CD4-positive, alpha-beta memory T cell (primary cell): ENCODE measurements at regions of chr12 and their contacts with region 1.

Region 1: GRCh38 chr12:51531978-51532497 is 59.0 kb upstream of the SCN8A start:
- DNase-seq: peak; percentile 60 to 70 (median 65)
- H3K4me3 ChIP-seq: no peak overlapping the region
- H3K4me3 Mint-ChIP-seq: no peak overlapping the region
- H3K27ac ChIP-seq: no peak overlapping the region
- H3K27ac Mint-ChIP-seq: peak overlapping the region in 2 of 7 donors; percentile 9 to 27
- H3K4me1 ChIP-seq: no peaks in the 10 kb centered on the region
- H3K4me1 Mint-ChIP-seq: peaks cover 3 to 8% (median 6%) of the 10 kb centered on the region in 4 donors
- H3K27me3 ChIP-seq: no peaks in the 10 kb centered on the region
- H3K27me3 Mint-ChIP-seq: peaks cover 6 to 11% of the 10 kb centered on the region in 2 donors

Region 2: GRCh38 chr12:51270067-51270970 is 261.7 kb before region 1 on chr12 and contains the start of gene SMAGP:
- CTCF ChIA-PET with region 1: interaction called, 9 read pairs
- POLR2A ChIA-PET with region 1: no interaction called
- intact Hi-C with region 1: loop called (anchors 1 kb)
- DNase-seq: peak; percentile 36 to 51 (median 38)
- H3K4me3 ChIP-seq: peak within 1 kb of the TSS; percentile 3 to 57
- H3K4me3 Mint-ChIP-seq: peak within 1 kb of the TSS; percentile 88 to 97 (median 96)
- H3K27ac ChIP-seq: peak within 1 kb of the TSS; percentile 2
- H3K27ac Mint-ChIP-seq: peak within 1 kb of the TSS; percentile 80 to 95 (median 90)
- H3K4me1 ChIP-seq: peaks cover 20% of the 10 kb centered on the region
- H3K4me1 Mint-ChIP-seq: peaks cover 19 to 38% (median 24%) of the 10 kb centered on the region in 4 donors
- H3K27me3 ChIP-seq: no peaks in the 10 kb centered on the region
- H3K27me3 Mint-ChIP-seq: no peaks in the 10 kb centered on the region
- total RNA-seq, gene SMAGP: 3.9 to 5.5 TPM

Region 3: GRCh38 chr12:51424662-51425438 is 107.2 kb before region 1 on chr12 and contains the start of gene SLC4A8:
- CTCF ChIA-PET with region 1: interaction called, 22 read pairs
- POLR2A ChIA-PET with region 1: no interaction called
- intact Hi-C with region 1: loop called (anchors 1 kb)
- DNase-seq: peak; percentile 62 to 74 (median 66)
- H3K4me3 ChIP-seq: peak within 1 kb of the TSS; percentile 4 to 51
- H3K4me3 Mint-ChIP-seq: peak within 1 kb of the TSS; percentile 80 to 88 (median 86)
- H3K27ac ChIP-seq: peak within 1 kb of the TSS; percentile 8
- H3K27ac Mint-ChIP-seq: peak within 1 kb of the TSS in 5 of 7 donors; percentile 72 to 88 (median 85)
- H3K4me1 ChIP-seq: peaks cover 6% of the 10 kb centered on the region
- H3K4me1 Mint-ChIP-seq: peaks cover 9 to 10% (median 10%) of the 10 kb centered on the region in 4 donors
- H3K27me3 ChIP-seq: no peaks in the 10 kb centered on the region
- H3K27me3 Mint-ChIP-seq: no peaks in the 10 kb centered on the region
- total RNA-seq, gene SLC4A8: 0.47 to 0.69 TPM

Region 4: DNA sequence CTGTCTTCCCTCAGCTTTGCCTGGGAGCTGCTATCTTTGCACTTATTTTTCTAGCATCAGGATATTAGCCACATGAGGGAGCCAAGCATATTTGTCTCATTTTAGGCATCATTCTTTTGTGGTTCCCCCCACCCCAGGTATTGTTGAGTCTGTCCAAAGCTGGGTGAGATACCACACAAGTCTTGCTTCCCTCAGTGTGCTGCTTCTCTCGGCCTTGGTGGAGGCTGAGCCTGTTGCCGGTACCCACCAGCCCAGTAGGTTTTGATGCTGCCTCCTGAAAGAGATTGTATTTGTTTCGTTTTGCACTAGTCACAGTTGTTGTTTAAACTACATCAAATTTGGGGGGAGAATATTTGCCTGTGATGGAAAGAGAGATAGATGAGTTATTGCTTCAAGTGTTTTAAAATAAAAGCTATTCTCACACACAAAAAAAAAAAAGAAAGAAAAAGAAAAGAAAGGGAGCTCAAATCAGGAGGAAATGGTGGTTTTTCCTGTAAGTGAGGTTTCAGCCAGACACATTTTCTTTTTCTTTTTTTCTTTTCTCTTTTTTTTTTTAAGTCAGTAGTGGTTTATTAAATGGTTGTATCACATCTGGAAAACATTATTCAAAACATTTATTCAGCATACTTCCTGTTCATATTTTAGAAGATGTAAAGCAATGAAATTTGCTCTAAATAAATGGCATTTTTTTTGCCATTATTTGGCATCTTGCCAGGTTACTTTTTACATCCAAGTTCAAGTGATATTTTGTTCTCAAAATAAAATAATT is 48.9 kb before region 1 on chr12:
- CTCF ChIA-PET with region 1: no interaction called
- POLR2A ChIA-PET with region 1: no interaction called
- intact Hi-C with region 1: loop called (anchors 5 kb)
- DNase-seq: peak in 4 of 5 donors; percentile 10 to 34 (median 28)
- H3K4me3 ChIP-seq: no peak overlapping the region
- H3K4me3 Mint-ChIP-seq: peak overlapping the region; percentile 56 to 88 (median 73)
- H3K27ac ChIP-seq: no peak overlapping the region
- H3K27ac Mint-ChIP-seq: peak overlapping the region; percentile 59 to 92 (median 84)
- H3K4me1 ChIP-seq: peaks cover 30% of the 10 kb centered on the region
- H3K4me1 Mint-ChIP-seq: peaks cover 22 to 38% (median 29%) of the 10 kb centered on the region in 4 donors
- H3K27me3 ChIP-seq: no peaks in the 10 kb centered on the region
- H3K27me3 Mint-ChIP-seq: no peaks in the 10 kb centered on the region

Region 5: DNA sequence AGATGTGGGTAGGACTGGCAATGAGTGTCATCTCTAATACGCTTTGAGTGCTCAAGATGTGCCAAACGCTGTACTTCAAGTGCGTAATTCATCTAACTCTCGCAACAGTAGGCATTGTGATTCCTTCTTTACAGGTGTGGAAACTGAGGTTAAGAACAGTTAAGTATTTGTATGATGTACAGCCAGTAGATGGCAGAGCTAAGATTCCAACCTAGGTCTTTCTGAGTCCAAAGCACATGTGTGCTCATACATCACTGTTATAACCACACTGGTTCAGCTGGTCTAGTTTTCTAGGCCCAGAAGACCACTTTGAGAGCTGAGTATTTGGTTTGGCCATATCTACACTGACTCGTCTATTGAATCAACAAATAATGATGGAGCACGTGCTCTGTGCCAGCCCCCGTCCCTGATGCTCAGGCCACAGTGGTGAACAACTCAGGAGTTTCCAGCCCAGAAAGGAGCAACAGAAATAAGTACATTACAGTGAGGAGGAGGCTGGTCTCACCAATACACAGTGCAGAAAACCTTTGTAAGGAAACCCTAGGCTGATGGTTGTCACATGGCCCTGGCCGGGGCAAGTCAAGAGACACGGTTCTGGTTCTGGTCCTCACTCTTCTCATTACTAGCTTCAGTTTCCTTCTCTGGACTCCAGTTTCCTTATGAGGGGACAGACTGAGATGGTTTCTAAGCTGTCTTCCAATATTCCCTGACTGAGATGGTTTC is 10.3 kb before region 1 on chr12:
- CTCF ChIA-PET with region 1: interaction called, 10 read pairs
- POLR2A ChIA-PET with region 1: no interaction called
- intact Hi-C with region 1: no loop called
- DNase-seq: no peak
- H3K4me3 ChIP-seq: no peak overlapping the region
- H3K4me3 Mint-ChIP-seq: no peak overlapping the region
- H3K27ac ChIP-seq: no peak overlapping the region
- H3K27ac Mint-ChIP-seq: no peak overlapping the region
- H3K4me1 ChIP-seq: no peaks in the 10 kb centered on the region
- H3K4me1 Mint-ChIP-seq: no peaks in the 10 kb centered on the region
- H3K27me3 ChIP-seq: no peaks in the 10 kb centered on the region
- H3K27me3 Mint-ChIP-seq: peaks cover 0 to 2% of the 10 kb centered on the region in 2 donors

Region 6: GRCh38 chr12:51771008-51771407 is 239.0 kb after region 1 on chr12:
- CTCF ChIA-PET with region 1: no interaction called
- POLR2A ChIA-PET with region 1: no interaction called
- intact Hi-C with region 1: no loop called
- DNase-seq: no peak
- H3K4me3 ChIP-seq: no peak overlapping the region
- H3K4me3 Mint-ChIP-seq: no peak overlapping the region
- H3K27ac ChIP-seq: no peak overlapping the region
- H3K27ac Mint-ChIP-seq: no peak overlapping the region
- H3K4me1 ChIP-seq: no peaks in the 10 kb centered on the region
- H3K4me1 Mint-ChIP-seq: no peaks in the 10 kb centered on the region
- H3K27me3 ChIP-seq: no peaks in the 10 kb centered on the region
- H3K27me3 Mint-ChIP-seq: peaks cover 3 to 6% of the 10 kb centered on the region in 2 donors

Region 7: GRCh38 chr12:51823875-51824565 is 292.0 kb after region 1 on chr12:
- CTCF ChIA-PET with region 1: interaction called, 5 read pairs
- POLR2A ChIA-PET with region 1: no interaction called
- intact Hi-C with region 1: loop called (anchors 1 kb)
- DNase-seq: peak in 3 of 5 donors; percentile 23 to 29 (median 26)
- H3K4me3 ChIP-seq: no peak overlapping the region
- H3K4me3 Mint-ChIP-seq: peak overlapping the region in 5 of 8 donors; percentile 1 to 71 (median 43)
- H3K27ac ChIP-seq: no peak overlapping the region
- H3K27ac Mint-ChIP-seq: peak overlapping the region in 5 of 7 donors; percentile 42 to 80 (median 59)
- H3K4me1 ChIP-seq: peaks cover 19% of the 10 kb centered on the region
- H3K4me1 Mint-ChIP-seq: peaks cover 17 to 34% (median 22%) of the 10 kb centered on the region in 4 donors
- H3K27me3 ChIP-seq: no peaks in the 10 kb centered on the region
- H3K27me3 Mint-ChIP-seq: no peaks in the 10 kb centered on the region